HEK293T (cell line): ENCODE measurements at regions of chr2 and their contacts with region 1.

Region 1: GRCh38 chr2:156332534-156333273 is at the start of gene NR4A2:
- DNase-seq: peak; percentile 82

Region 2: GRCh38 chr2:156400706-156401678 is 68.3 kb after region 1 on chr2:
- CTCF ChIA-PET with region 1: no interaction called
- POLR2A ChIA-PET with region 1: interaction called, 12 read pairs
- DNase-seq: peak; percentile 58

Region 3: GRCh38 chr2:156589381-156590079 is 256.8 kb after region 1 on chr2:
- CTCF ChIA-PET with region 1: interaction called, 12 read pairs
- POLR2A ChIA-PET with region 1: interaction called, 13 read pairs
- DNase-seq: peak; percentile 43